A673 (cell line): ENCODE measurements at regions of chr18 and their contacts with region 1.

Region 1: DNA sequence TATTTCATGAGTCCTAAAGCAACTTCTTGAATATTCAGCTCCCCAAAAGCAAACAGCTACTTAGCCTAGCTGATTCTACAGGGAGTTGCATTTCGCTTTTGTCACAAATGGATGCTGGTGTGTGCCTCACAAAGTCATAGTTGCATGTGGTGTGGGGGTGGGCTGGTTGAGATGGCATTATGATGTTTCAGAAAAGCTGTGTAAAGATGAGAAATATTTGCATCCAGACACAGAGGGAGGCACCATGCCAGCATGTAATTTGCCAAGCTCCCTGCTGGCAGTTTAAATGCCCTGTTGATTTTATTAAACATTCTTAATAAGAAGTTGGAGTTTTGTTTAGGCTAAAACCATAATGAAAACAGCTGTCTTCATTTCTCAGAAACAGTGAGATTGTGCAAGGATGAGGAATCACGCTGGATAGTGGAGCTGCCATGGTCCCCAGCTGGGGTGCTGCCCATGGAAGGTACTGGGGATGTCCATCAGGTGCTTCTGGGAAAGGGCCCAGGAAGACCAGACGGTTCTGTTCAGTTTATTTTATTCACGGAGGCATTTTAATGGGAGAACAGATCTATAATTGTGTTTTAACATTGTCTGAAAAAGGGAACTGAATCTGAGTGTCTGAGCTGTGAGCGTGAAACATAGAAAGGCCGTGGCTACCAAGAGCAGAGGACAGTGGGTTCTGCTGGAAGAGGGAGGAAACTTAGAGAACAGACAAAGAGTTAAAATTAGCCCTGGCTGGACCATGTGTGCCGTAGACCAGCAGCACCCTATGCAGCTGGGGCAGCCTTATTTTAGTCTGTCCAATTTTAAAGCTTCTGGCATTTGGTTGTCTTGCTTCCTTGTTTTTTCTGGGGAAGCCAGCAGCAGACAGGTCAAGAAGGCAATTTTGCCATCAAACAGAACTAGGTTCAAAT is 177.1 kb downstream of the FAM210A start:
- DNase-seq: no peak
- H3K4me3 ChIP-seq: no peak overlapping the region
- H3K27ac ChIP-seq: no peak overlapping the region
- H3K4me1 ChIP-seq: peaks cover 18% of the 10 kb centered on the region
- H3K27me3 ChIP-seq: peaks cover 4% of the 10 kb centered on the region
- CTCF ChIP-seq: no peak

Region 2: DNA sequence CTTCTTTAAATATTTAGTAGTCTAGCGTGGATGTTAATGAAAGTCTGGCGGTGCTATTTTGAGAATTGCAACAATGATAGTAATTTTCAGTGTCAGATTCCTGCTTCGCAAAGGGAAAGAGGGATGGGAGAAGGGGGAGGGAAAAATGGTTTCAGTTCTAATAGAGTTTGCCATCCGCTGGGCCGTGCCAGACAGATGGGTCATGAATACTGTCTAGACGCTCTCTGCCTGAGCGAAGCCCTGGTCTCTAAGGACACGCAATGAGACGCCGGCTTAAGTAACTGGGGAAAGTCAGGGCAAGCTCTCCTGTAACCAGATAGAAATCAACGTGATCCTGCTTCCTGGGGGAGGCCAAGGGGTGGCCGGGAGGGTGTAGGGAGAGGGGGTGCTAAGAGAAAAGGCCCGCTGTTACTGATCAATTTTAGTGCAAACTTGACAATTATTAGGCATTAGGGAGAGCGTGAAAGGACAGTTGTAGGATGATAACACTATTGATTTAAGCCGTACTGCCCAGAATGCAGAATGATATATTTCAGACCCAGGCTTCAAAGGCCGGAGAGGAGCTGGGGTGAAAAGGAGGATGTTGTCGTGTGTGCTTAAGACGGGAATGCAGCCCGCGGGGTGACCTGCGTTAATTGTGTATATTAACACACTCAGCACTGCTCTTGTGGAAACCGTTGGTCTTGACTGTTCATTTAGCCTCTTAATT is 101.4 kb before region 1 on chr18:
- CTCF ChIA-PET with region 1: no interaction called
- POLR2A ChIA-PET with region 1: no interaction called
- intact Hi-C with region 1: loop called (anchors 10 kb)
- DNase-seq: peak; percentile 89
- H3K4me3 ChIP-seq: peak overlapping the region; percentile 13
- H3K27ac ChIP-seq: no peak overlapping the region
- H3K4me1 ChIP-seq: peaks cover 32% of the 10 kb centered on the region
- H3K27me3 ChIP-seq: no peaks in the 10 kb centered on the region
- CTCF ChIP-seq: no peak